ENCODE measurements at regions of chr11 and their contacts with region 1.

Region 1: GRCh38 chr11:111694851-111695250 is 71.3 kb downstream of the PPP2R1B start:
- DNase-seq: peak; percentile 58
- H3K4me3 ChIP-seq: peak overlapping the region; percentile 33
- H3K27ac ChIP-seq: peak overlapping the region; percentile 94
- H3K4me1 ChIP-seq: peaks cover 68% of the 10 kb centered on the region
- CTCF ChIP-seq: no peak

Region 2: GRCh38 chr11:111707039-111707690 is 12.3 kb after region 1 on chr11:
- CTCF ChIA-PET with region 1: no interaction called
- POLR2A ChIA-PET with region 1: interaction called, 15 read pairs
- intact Hi-C with region 1: no loop called
- DNase-seq: no peak
- H3K4me3 ChIP-seq: no peak overlapping the region
- H3K27ac ChIP-seq: no peak overlapping the region
- H3K4me1 ChIP-seq: no peaks in the 10 kb centered on the region
- CTCF ChIP-seq: no peak

Region 3: GRCh38 chr11:111766093-111766833 is 71.4 kb after region 1 on chr11 and contains the start of gene PPP2R1B:
- CTCF ChIA-PET with region 1: no interaction called
- POLR2A ChIA-PET with region 1: interaction called, 13 read pairs
- intact Hi-C with region 1: no loop called
- DNase-seq: peak; percentile 74
- H3K4me3 ChIP-seq: peak within 1 kb of the TSS; percentile 88
- H3K27ac ChIP-seq: peak within 1 kb of the TSS; percentile 35
- H3K4me1 ChIP-seq: peaks cover 17% of the 10 kb centered on the region
- CTCF ChIP-seq: no peak
- total RNA-seq, gene PPP2R1B: 30.2 and 50.6 TPM in 2 replicates